Activated B cell treated with CpG ODN at 0.5 μM for 24 hours (primary cell): ENCODE measurements at regions of chr2 and their contacts with region 1.

Region 1: GRCh38 chr2:216195565-216196029 is 86.4 kb downstream of the XRCC5 start:
- DNase-seq: no peak
- ATAC-seq: peak; percentile 56
- H3K4me3 Mint-ChIP-seq: no peak overlapping the region
- H3K27ac Mint-ChIP-seq: peak overlapping the region; percentile 57
- H3K4me1 Mint-ChIP-seq: peaks cover 20% of the 10 kb centered on the region
- H3K27me3 Mint-ChIP-seq: no peaks in the 10 kb centered on the region
- CTCF ChIP-seq: no peak

Region 2: GRCh38 chr2:216206041-216206703 is 10.6 kb after region 1 on chr2:
- CTCF ChIA-PET with region 1: no interaction called
- POLR2A ChIA-PET with region 1: no interaction called
- intact Hi-C with region 1: loop called (anchors 1 kb)
- DNase-seq: no peak
- ATAC-seq: peak; percentile 78
- H3K4me3 Mint-ChIP-seq: no peak overlapping the region
- H3K27ac Mint-ChIP-seq: peak overlapping the region; percentile 50
- H3K4me1 Mint-ChIP-seq: peaks cover 21% of the 10 kb centered on the region
- H3K27me3 Mint-ChIP-seq: no peaks in the 10 kb centered on the region
- CTCF ChIP-seq: no peak

Region 3: DNA sequence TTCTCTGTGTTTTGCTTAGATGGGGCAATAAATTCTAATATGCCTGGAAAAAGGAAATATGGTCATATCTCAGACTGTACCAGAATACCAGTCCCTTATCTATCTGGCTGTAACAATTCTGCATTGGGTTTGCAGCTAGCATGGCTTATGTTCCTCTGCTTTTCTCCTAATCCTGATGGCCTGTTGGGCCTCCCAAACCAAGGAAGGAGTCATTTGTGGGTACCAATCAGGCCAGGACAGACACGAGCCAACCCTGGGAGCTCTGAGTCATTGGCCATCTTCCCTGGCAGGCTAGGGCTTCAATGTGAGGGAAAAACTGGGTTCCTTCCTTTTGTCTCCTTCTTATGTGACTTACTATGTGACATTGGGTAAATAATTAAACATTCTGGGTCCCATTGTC is 228.7 kb after region 1 on chr2:
- CTCF ChIA-PET with region 1: no interaction called
- POLR2A ChIA-PET with region 1: interaction called, 14 read pairs
- intact Hi-C with region 1: no loop called
- DNase-seq: no peak
- ATAC-seq: no peak
- H3K4me3 Mint-ChIP-seq: no peak overlapping the region
- H3K27ac Mint-ChIP-seq: no peak overlapping the region
- H3K4me1 Mint-ChIP-seq: no peaks in the 10 kb centered on the region
- H3K27me3 Mint-ChIP-seq: no peaks in the 10 kb centered on the region
- CTCF ChIP-seq: no peak